ENCODE measurements at regions of chr5 and their contacts with region 1.

Region 1: DNA sequence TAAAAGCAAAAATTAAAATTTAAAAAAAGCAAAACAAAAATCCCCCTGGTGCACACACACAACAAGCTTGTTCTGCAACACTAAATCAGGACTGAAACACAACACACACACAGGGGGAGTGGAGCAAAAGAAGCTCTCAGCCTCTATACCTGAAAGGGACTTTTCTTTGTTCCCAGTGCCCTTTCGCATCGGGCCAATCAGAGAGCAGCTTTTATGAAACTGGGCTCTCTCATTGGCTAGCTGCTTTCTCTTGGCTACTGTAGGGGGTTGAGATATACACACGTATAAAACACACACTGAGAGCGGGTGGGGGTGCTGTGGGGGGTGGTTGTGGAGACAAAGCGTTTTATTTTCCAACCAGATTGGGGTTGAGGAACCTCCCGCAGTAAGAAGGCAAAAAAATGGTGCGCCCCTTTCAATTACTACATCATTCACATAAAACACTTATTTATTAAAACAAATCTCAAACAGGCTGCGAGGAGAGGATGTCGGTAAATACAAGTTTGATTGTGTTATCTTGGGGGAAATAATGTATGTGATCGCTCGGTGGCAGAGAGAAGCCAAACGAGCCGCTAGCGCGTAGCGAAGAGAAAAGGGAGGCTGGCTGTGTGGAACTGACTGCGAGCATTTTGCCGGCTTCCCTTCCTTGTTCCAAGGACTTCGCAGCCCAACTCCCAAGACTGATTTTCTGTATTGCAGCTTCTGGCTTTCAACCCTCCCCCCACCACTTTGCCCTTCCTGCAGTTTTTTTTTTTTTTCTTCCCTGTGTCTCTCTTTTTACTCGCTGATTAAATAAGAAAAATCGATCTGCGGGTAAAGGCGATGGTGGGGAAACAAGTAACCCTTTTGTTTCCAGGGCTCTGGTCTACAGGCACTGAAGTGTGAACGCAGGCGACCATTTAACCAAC is 2.5 kb upstream of the ZNF608 start:
- DNase-seq: peak; percentile 58 to 96 (median 86)
- H3K4me3 ChIP-seq: peak overlapping the region; percentile 55 to 92 (median 80)
- H3K27ac ChIP-seq: peak overlapping the region; percentile 89 to 99 (median 97)
- H3K27me3 ChIP-seq: peaks cover 0 to 4% (median 0%) of the 10 kb centered on the region in 45 donors
- CTCF ChIP-seq: peak in 9 of 56 donors; percentile 5 to 28 (median 10)

Region 2: DNA sequence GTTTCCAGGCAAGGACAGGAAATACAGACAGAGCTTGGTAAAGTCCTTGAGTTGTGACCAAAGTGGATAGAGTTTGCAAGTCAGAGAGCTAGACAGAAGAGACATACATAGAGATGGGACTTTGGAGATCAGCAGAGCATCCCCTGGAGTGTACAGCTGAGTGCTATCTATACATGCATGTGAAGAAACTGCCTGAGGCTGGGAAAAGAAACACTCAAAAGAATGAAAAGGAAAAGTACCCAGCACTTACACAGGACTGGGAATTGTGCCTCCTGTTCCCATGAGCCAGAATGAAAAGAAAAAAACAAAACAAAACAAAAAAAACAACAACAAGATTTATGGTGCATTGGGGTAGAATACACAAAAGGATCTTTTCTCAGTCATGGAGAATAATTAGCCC is 608.9 kb before region 1 on chr5:
- intact Hi-C with region 1: no loop called
- DNase-seq: no peak
- H3K4me3 ChIP-seq: no peak overlapping the region
- H3K27ac ChIP-seq: peak overlapping the region in 2 of 59 donors; percentile 1 to 8
- H3K27me3 ChIP-seq: no peaks in the 10 kb centered on the region
- CTCF ChIP-seq: no peak

Region 3: DNA sequence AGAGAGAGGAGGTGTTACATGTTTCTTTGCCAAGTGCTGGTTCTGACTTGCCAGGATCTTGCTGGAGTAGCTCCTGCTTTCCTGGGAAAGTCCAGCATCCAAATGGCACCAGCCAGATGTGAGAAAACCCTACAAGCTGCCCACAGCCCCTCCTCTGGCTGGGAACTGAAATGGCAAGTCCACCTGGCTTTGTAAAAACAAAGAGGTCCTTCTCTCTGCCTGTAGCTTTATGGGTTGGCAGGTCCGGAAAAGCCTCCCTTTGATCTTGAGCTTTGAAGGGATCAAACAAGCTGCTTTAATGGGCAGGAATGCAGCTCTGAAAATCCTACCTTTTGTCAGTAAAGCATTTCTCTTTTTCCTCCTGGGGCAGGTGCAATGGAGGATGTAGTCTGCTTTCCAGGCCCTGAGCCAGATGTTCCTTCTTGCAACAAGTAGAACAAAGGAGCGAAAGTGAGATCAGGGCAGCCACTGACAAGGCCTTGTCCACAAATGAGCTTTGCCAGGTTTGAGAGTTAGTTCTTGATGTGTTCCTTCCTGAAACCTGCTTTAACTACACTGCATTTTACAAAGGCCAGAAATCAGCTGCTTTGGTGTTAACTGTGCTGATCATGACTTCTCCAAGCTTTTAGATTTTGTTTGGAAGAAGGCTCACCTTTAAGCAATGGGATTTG is 459.2 kb before region 1 on chr5:
- intact Hi-C with region 1: loop called in 1 of 2 experiments (anchors 10 kb)
- DNase-seq: peak in 9 of 10 donors; percentile 23 to 55 (median 38)
- H3K4me3 ChIP-seq: peak overlapping the region in 1 of 59 donors; percentile 10
- H3K27ac ChIP-seq: peak overlapping the region; percentile 21 to 94 (median 88)
- H3K27me3 ChIP-seq: no peaks in the 10 kb centered on the region
- CTCF ChIP-seq: peak in 6 of 56 donors; percentile 2 to 26 (median 11)

Region 4: DNA sequence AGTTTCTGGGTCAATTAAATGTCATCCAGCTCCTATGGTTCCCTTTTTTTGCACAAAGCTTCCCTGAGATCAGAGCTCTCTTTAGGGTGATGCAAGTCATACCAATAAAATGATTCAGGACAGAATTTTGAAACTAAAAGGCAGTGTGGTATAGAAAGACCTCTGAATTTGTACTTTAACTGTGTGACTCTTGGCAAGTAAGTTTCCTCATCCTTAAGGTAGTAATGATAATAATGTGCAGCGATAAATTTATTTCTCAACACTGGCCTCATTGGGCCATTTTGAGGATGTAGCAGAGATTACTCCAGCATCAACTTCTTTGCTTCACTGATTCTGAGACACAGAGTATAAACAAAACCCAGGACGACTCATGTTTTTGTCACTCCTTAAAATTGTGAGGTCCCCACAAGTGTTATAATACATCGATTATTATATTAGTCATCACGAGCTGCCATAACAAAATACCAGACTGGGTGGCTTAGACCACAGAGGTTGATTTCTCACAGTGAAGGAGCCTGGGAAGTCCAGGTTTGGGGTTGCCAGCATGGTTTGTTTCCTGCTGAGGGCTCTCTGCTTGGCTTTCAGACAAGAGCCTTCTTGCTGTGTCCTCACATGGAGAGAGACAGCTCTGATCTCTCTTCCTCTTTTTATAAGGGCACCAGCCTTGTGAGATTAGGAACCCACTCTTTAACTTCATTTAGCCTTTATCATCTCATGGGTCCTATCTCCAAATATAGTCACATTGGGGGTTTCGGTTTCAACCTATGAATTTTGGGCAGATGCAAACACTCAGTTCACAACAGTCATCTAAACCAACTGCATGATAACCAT is 295.5 kb before region 1 on chr5:
- intact Hi-C with region 1: loop called in 1 of 2 experiments (anchors 10 kb)
- DNase-seq: no peak
- H3K4me3 ChIP-seq: no peak overlapping the region
- H3K27ac ChIP-seq: peak overlapping the region in 4 of 59 donors; percentile 21 to 73 (median 48)
- H3K27me3 ChIP-seq: no peaks in the 10 kb centered on the region
- CTCF ChIP-seq: no peak

Region 5: DNA sequence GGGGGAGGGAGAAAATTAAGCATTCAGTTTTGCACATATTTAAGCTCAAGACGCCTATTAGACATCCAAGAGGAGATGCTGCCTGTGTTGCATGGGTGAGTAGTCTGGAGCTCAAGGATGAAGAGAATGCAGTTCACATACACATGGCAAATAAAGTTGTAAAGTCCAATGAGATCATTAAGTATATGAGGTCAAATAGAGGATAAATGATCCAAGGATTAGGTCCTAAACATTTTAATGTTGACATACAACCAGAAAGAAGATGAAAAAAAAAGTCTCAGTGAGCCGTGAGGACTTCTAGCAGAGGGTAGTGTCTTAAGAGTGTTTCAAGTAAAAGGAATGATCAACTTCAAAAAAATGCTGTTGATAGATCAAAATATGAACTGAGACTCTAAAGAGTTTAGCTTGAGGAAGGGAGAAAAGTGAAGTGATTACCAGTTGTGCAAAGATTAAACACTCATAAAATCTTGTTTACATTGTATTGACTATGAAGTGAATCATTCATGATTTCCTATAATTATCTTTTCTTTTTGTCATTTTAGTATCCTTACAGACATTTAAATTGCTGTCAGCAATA is 254.3 kb before region 1 on chr5:
- intact Hi-C with region 1: no loop called
- DNase-seq: no peak
- H3K4me3 ChIP-seq: no peak overlapping the region
- H3K27ac ChIP-seq: no peak overlapping the region
- H3K27me3 ChIP-seq: no peaks in the 10 kb centered on the region
- CTCF ChIP-seq: no peak

Region 6: DNA sequence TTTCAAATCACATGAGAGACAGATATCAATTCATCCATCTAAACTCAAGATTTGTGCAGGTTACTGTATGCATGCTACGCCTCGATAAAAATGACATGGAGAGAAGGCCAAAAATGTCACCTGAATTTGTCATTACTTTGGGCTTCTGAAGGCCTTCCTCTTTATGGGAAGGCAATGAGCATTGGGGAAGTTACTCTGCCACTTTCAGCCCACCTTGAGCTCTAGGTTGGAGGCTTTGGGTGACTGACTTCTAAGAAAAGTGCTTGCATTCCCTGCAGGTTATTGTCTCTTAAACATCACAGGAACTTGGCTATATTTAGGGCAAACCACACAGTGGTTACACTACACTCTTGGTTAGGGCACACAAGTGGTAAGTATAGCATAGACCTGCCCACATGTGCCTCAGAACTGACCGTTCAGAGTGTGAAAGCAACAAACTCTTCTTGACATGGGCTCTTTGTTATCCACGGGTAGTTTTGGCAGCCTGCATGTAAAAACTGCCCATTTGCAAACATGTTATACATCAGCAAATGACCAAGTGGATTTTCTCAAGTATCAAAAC is 172.0 kb before region 1 on chr5:
- intact Hi-C with region 1: loop called (anchors 10 kb)
- DNase-seq: no peak
- H3K4me3 ChIP-seq: no peak overlapping the region
- H3K27ac ChIP-seq: peak overlapping the region in 57 of 59 donors; percentile 1 to 97 (median 89)
- H3K27me3 ChIP-seq: no peaks in the 10 kb centered on the region
- CTCF ChIP-seq: no peak

Region 7: DNA sequence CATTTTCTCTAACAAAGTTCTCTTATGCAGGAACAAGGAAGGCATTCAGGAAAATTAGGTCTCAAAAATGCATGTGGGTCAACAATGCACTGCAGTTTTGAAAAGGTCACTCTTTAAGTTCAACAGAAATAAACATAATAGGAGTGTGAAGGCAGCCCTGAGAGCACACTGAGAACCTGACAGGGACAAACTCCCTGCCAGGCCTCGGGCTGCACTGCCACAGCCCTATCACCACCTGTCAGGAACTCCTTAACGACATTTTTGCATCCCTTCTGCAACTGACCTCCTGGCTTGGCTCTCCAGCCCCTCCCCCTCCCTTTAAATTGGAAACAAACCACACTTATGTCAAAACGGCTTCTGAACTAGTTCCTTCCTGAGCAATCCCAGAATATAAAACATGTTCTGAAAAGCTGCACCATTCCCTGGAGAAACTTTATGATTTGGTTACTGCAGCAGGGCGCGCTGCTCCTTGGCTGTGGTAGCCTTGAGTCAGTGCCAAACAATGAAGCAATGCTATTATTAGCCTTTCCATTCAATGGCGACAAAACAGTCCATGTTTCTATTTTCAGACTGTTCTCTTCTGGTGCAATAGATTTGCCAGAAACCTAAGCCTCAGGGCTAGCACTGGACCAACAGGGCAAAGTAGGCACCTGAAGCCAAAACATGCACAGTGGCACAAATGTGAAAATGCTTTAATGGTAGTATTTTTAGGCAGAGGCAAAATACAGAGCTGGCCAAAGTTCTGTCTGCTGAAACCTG is 157.6 kb after region 1 on chr5:
- intact Hi-C with region 1: loop called (anchors 1 to 5 kb)
- DNase-seq: peak in 7 of 10 donors; percentile 34 to 76 (median 68)
- H3K4me3 ChIP-seq: peak overlapping the region in 33 of 59 donors; percentile 0 to 51 (median 23)
- H3K27ac ChIP-seq: peak overlapping the region; percentile 62 to 98 (median 92)
- H3K27me3 ChIP-seq: no peaks in the 10 kb centered on the region
- CTCF ChIP-seq: peak in 41 of 56 donors; percentile 6 to 49 (median 31)

Region 8: GRCh38 chr5:125412561-125413495 is 663.9 kb after region 1 on chr5:
- intact Hi-C with region 1: loop called (anchors 5 kb)
- DNase-seq: peak; percentile 80 to 95 (median 92)
- H3K4me3 ChIP-seq: peak overlapping the region in 58 of 59 donors; percentile 4 to 67 (median 45)
- H3K27ac ChIP-seq: peak overlapping the region; percentile 79 to 99 (median 95)
- H3K27me3 ChIP-seq: no peaks in the 10 kb centered on the region
- CTCF ChIP-seq: peak in 54 of 56 donors; percentile 17 to 69 (median 50)

Measured in dorsolateral prefrontal cortex (tissue), 120 donors.